ENCODE measurements at regions of chr12 and their contacts with region 1.

Region 1: GRCh38 chr12:96399919-96400797 is at the start of gene CDK17:
- DNase-seq: peak; percentile 85 to 94 (median 90)
- ATAC-seq: peak; percentile 69 to 70
- H3K4me3 Mint-ChIP-seq: peak within 1 kb of the TSS; percentile 90 to 97 (median 96)
- H3K27ac Mint-ChIP-seq: peak within 1 kb of the TSS; percentile 91 to 99 (median 97)
- H3K4me1 Mint-ChIP-seq: peaks cover 10 to 56% (median 44%) of the 10 kb centered on the region in 4 donors
- H3K27me3 Mint-ChIP-seq: no peaks in the 10 kb centered on the region
- polyA plus RNA-seq, gene CDK17: 22.1 to 32.2 (median 26.6) TPM

Region 2: GRCh38 chr12:96015672-96016071 is 384.5 kb before region 1 on chr12:
- POLR2A ChIA-PET with region 1: no interaction called
- DNase-seq: no peak
- ATAC-seq: no peak
- H3K4me3 Mint-ChIP-seq: no peak overlapping the region
- H3K27ac Mint-ChIP-seq: no peak overlapping the region
- H3K4me1 Mint-ChIP-seq: peaks cover 0 to 12% (median 0%) of the 10 kb centered on the region in 4 donors
- H3K27me3 Mint-ChIP-seq: no peaks in the 10 kb centered on the region

Region 3: DNA sequence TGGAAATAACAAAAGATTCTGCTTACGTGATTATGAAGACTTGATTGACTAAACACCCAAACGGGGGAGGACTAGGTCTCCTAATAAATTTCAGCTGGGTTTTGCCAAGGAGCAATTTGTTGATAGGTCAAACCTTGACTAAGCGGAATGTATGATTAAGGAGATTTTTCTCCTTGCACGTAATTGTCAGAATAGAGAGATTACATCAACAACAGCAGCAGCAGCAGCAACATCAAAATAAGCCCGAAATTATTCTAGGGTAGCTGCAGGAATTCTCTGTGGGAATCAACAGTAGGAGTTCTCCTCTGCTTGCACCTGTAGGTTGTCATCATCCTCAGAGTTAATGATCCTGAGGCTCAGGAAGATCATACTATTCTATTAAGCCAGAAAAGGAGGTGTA is 195.8 kb before region 1 on chr12:
- POLR2A ChIA-PET with region 1: no interaction called
- DNase-seq: no peak
- ATAC-seq: no peak
- H3K4me3 Mint-ChIP-seq: peak overlapping the region in 1 of 10 donors; percentile 77
- H3K27ac Mint-ChIP-seq: peak overlapping the region in 2 of 10 donors; percentile 26 to 42
- H3K4me1 Mint-ChIP-seq: peaks cover 36 to 82% (median 63%) of the 10 kb centered on the region in 4 donors
- H3K27me3 Mint-ChIP-seq: no peaks in the 10 kb centered on the region

Region 4: DNA sequence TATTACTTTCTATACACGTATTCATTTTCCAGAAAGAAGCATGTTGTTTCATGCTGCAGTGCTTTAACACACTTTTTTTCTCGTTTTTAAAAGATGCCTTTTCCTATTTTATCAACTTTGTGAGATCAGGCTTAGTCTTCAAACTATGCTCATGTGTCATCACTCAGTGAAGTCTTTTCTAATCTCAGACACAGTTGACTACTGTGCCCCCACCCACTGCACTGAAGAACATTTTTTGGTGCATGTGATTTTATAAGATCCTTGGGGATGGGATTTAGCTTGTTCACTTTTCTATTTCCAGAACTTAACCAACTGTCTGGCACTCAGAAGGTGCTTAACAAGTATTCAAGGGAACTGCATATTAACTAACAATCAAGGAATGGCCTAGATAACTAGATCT is 85.4 kb before region 1 on chr12:
- POLR2A ChIA-PET with region 1: interaction called, 32 read pairs
- DNase-seq: no peak
- ATAC-seq: no peak
- H3K4me3 Mint-ChIP-seq: peak overlapping the region in 2 of 10 donors; percentile 18 to 56
- H3K27ac Mint-ChIP-seq: peak overlapping the region; percentile 2 to 77 (median 40)
- H3K4me1 Mint-ChIP-seq: peaks cover 7 to 21% (median 13%) of the 10 kb centered on the region in 4 donors
- H3K27me3 Mint-ChIP-seq: no peaks in the 10 kb centered on the region

Region 5: DNA sequence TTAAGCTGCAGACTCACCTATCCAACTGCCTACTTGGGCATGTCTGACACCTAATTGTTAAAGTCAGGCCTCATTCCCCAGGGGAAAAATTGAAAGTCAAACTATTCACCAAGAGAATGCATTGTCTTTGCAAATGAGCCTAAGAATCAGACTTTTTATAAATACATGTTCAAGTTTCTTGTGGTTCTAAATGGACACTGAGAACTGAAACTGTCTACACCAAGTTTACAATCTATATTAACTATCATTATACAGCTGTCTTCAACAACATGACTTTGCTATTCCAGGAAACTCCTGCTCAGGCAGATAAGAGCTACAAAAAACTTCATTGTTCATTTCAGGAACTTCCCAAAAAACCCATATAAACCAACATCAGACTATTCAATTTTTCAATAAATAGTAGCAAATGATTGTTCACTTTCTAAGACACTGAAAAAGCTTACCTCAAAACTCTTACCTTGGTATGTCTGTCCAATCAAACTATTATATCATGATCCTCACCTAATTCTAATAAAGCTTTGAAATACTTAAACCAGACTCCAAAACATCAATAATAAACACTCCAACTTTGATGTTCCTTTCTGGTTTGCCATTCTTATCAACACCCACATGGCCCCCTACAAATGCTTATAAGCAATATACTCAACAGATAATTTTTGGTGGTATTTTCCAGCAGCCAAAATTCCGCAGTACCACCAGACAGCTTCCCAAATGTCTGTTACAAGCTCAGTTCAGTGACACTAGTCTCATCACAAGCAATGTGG is 24.1 kb before region 1 on chr12:
- POLR2A ChIA-PET with region 1: interaction called, 54 read pairs
- DNase-seq: no peak
- ATAC-seq: no peak
- H3K4me3 Mint-ChIP-seq: peak overlapping the region in 9 of 10 donors; percentile 17 to 91 (median 35)
- H3K27ac Mint-ChIP-seq: peak overlapping the region; percentile 16 to 99 (median 88)
- H3K4me1 Mint-ChIP-seq: peaks cover 42 to 92% (median 76%) of the 10 kb centered on the region in 4 donors
- H3K27me3 Mint-ChIP-seq: no peaks in the 10 kb centered on the region

Region 6: DNA sequence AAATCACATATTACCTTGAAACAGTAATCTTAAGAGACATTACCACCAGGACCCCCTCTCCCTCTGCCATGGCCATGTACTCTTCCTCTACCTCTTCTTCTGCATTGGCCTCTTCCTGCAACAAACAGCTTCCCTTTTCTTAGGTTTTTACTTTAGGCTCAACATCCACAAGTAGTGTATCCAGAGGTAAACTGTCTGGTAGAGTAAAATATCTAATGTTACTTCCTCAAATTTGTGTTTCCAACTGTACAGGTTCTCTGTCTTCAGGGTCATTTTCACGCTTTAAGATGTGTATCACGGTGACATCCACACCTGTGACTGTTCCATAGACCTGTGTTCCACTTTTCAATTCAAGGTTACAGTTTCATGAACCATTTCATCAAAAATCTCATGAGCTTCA is 13.4 kb before region 1 on chr12:
- POLR2A ChIA-PET with region 1: interaction called, 54 read pairs
- DNase-seq: no peak
- ATAC-seq: no peak
- H3K4me3 Mint-ChIP-seq: peak overlapping the region in 6 of 10 donors; percentile 11 to 64 (median 32)
- H3K27ac Mint-ChIP-seq: peak overlapping the region in 9 of 10 donors; percentile 15 to 86 (median 81)
- H3K4me1 Mint-ChIP-seq: peaks cover 22 to 84% (median 80%) of the 10 kb centered on the region in 4 donors
- H3K27me3 Mint-ChIP-seq: no peaks in the 10 kb centered on the region

Region 7: DNA sequence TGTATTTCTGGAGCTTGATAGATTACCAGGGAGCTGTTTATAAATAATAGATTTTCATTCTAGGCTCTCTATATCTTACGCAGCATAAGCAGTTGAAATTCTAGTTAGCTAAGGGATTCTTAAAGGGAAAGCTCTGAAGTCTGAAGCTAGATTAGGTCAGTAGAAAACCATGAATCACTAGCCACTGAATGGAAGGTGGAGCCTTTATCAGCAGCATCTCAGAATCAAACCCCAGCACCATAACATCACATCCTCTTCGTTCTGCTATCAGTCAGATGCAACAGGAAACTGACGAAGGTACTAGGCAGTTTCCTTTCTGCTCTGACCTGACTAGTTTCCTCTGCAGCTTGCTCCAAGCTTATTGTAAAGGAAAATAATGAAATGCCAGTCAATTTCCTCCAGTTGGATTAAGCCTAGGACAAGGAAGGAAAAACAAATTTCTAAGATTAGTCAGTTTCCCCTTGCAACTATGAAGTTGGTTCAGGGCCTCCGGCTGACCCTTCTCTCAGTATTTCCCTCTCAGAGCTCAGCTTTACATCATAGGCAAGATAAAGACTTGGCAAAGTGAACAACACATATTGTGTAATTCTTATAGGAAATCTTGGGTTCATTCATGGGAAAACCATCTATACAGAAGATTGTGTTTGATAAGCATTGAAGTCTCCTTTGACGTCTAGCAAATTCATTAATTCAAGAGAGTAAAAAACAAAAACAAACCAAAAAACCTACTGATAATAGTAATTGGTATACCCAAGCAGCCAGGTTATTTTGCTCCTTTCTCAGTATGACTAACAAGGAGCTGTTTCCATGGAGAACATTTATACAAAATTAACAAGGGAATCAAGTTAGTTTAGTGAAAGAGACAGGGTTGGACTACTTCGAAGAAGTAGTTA is 45.8 kb after region 1 on chr12:
- POLR2A ChIA-PET with region 1: interaction called, 18 read pairs
- DNase-seq: peak in 9 of 10 donors; percentile 43 to 83 (median 71)
- ATAC-seq: peak; percentile 98
- H3K4me3 Mint-ChIP-seq: peak overlapping the region; percentile 1 to 72 (median 59)
- H3K27ac Mint-ChIP-seq: peak overlapping the region; percentile 90 to 98 (median 96)
- H3K4me1 Mint-ChIP-seq: peaks cover 12 to 44% (median 37%) of the 10 kb centered on the region in 4 donors
- H3K27me3 Mint-ChIP-seq: no peaks in the 10 kb centered on the region

Region 8: DNA sequence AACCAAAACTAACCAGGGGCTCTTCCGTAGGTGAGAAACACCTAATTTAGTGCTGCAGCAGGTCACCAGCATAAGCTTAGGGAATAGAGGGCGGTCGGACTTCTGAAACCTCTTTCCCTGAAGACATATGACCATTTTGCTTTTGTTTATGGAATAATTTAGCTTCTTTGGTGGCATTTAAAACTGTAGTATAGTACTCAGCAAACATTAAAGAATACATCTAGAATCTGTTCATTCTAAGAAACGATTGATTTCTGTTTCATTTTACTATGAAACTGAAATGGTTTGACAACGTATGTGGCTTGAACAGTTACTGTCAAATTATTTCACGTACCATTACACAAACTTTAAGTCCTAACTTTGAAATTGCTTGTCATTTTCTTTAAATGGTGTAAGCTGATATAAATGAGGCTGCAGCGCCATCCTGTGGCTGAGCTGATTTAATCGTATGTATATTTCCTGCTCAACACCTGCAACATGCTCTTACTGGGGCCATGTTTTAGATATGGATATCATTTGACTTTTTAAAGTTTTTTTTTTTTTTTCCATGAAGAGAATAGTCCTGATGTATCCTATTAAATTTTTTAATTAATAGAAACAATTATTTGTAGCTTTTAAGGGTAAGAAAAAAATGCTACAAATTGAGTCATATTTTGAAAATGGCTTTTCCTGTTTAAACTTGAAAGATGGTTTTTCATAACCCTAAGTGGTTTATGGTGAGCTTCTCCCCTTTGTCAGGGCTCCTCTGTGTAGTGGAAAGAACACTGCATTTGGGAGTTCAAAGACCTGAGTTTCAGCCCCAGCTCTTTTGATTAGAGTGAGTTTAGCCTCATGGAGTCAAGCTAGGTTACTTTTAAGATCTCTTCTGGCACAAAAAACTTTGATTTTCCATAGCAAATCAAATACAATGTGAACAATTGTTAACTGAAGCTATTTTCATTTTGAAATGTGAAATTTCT is 116.6 kb after region 1 on chr12:
- POLR2A ChIA-PET with region 1: interaction called, 22 read pairs
- DNase-seq: peak; percentile 70 to 92 (median 80)
- ATAC-seq: peak; percentile 85 to 88
- H3K4me3 Mint-ChIP-seq: peak overlapping the region in 3 of 10 donors; percentile 18 to 33 (median 22)
- H3K27ac Mint-ChIP-seq: peak overlapping the region; percentile 47 to 87 (median 72)
- H3K4me1 Mint-ChIP-seq: peaks cover 5 to 16% (median 12%) of the 10 kb centered on the region in 4 donors
- H3K27me3 Mint-ChIP-seq: no peaks in the 10 kb centered on the region